AG04449 (cell line): ENCODE measurements at regions of chr4 and their contacts with region 1.

Region 1: DNA sequence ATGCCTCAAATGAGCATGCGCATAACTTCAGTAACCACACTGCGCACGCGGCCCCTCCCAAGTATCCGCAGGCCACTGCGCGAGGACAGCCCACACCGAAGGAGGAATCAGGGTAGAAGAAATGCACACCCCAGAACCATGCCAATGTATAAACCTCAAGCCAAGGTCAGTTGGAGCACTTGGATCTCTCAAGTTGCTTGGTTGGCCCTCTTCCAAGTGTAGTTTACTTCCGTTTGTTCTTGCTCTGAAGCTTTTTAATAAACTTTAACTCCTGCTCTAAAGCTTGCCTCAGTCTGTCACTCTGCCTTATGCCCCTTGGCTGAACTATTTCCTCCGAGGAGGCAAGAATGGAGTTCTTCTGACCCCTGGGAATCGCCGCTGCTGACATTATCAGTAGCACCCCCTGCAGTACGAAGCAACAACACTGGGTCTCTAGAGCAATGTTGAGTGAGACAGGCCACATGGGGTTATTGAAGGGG is 22.0 kb upstream of the SPINK2 start:
- DNase-seq: no peak
- H3K4me3 ChIP-seq: no peak overlapping the region
- CTCF ChIP-seq: no peak

Region 2: GRCh38 chr4:56575820-56576429 is 267.5 kb before region 1 on chr4:
- CTCF ChIA-PET with region 1: interaction called, 50 read pairs
- POLR2A ChIA-PET with region 1: no interaction called
- DNase-seq: peak; percentile 12
- H3K4me3 ChIP-seq: no peak overlapping the region
- CTCF ChIP-seq: peak; percentile 37